CD4-positive, alpha-beta T cell (primary cell): ENCODE measurements at regions of chr5 and their contacts with region 1.

Region 1: DNA sequence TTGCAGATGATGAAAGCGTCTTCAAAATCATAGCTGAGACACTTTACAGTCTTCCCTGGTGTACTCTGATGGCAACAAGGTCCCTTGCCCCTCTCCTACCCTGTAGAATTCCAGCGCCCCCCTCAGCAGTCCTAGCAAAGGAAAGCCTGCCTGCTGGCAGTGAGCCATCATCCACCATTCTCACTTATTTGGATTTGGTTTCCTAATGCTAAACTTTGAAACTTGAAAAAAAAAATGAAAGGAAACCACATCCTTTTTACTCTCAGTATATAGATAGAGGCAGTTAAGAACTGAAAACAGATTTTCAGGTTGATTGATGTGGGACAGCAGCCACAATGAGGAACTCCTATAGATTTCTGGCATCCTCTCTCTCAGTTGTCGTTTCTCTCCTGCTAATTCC is at the start of gene GZMA:
- DNase-seq: peak in 9 of 14 experiments; percentile 5 to 86 (median 47)
- ATAC-seq: peak; percentile 80
- H3K4me3 ChIP-seq: peak within 1 kb of the TSS; percentile 59
- H3K4me3 Mint-ChIP-seq: peak within 1 kb of the TSS; percentile 85
- H3K27ac ChIP-seq: peak within 1 kb of the TSS in 1 of 2 donors; percentile 61
- H3K27ac Mint-ChIP-seq: peak within 1 kb of the TSS; percentile 68
- H3K4me1 ChIP-seq: peaks cover 49% of the 10 kb centered on the region
- H3K4me1 Mint-ChIP-seq: peaks cover 80% of the 10 kb centered on the region
- H3K27me3 ChIP-seq: no peaks in the 10 kb centered on the region
- H3K27me3 Mint-ChIP-seq: no peaks in the 10 kb centered on the region
- CTCF ChIP-seq: no peak
- total RNA-seq, gene GZMA: 3.5 to 5.0 TPM

Region 2: DNA sequence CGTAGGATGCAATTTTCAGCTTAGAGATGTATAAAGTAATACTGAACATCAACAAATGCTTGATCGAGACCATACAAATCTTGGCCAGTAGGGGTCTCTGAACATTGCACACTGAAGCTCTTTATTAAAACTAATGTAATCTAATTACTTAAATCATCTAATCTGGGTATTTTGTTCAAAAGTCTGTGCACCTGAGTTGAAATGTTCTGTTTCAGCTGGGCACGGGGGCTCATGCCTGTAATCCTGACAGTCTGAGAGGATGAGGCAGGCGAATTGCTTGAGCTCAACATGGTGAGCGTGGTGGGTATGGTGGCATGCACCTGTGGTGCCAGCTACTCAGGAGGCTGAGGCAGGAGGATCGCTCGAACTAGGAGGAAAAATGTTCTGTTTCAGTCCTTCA is 158.0 kb before region 1 on chr5:
- CTCF ChIA-PET with region 1: interaction called, 4 read pairs
- POLR2A ChIA-PET with region 1: interaction called, 17 read pairs
- intact Hi-C with region 1: no loop called
- DNase-seq: peak in 11 of 14 experiments; percentile 11 to 77 (median 29)
- ATAC-seq: peak; percentile 58
- H3K4me3 ChIP-seq: no peak overlapping the region
- H3K4me3 Mint-ChIP-seq: no peak overlapping the region
- H3K27ac ChIP-seq: no peak overlapping the region
- H3K27ac Mint-ChIP-seq: no peak overlapping the region
- H3K4me1 ChIP-seq: peaks cover 3% of the 10 kb centered on the region
- H3K4me1 Mint-ChIP-seq: no peaks in the 10 kb centered on the region
- H3K27me3 ChIP-seq: no peaks in the 10 kb centered on the region
- H3K27me3 Mint-ChIP-seq: no peaks in the 10 kb centered on the region
- CTCF ChIP-seq: peak; percentile 89

Region 3: GRCh38 chr5:55037046-55037771 is 65.1 kb before region 1 on chr5:
- CTCF ChIA-PET with region 1: no interaction called
- POLR2A ChIA-PET with region 1: interaction called, 25 read pairs
- intact Hi-C with region 1: loop called in 1 of 2 experiments (anchors 2 kb)
- DNase-seq: peak in 13 of 14 experiments; percentile 17 to 85 (median 51)
- ATAC-seq: peak; percentile 91
- H3K4me3 ChIP-seq: no peak overlapping the region
- H3K4me3 Mint-ChIP-seq: peak overlapping the region; percentile 40
- H3K27ac ChIP-seq: peak overlapping the region; percentile 55 to 64
- H3K27ac Mint-ChIP-seq: peak overlapping the region; percentile 80
- H3K4me1 ChIP-seq: peaks cover 15% of the 10 kb centered on the region
- H3K4me1 Mint-ChIP-seq: peaks cover 39% of the 10 kb centered on the region
- H3K27me3 ChIP-seq: no peaks in the 10 kb centered on the region
- H3K27me3 Mint-ChIP-seq: no peaks in the 10 kb centered on the region
- CTCF ChIP-seq: peak; percentile 14

Region 4: GRCh38 chr5:55062039-55062779 is 40.1 kb before region 1 on chr5:
- CTCF ChIA-PET with region 1: no interaction called
- POLR2A ChIA-PET with region 1: interaction called, 27 read pairs
- intact Hi-C with region 1: loop called (anchors 2 to 5 kb)
- DNase-seq: peak; percentile 3 to 89 (median 32)
- ATAC-seq: peak; percentile 77
- H3K4me3 ChIP-seq: peak overlapping the region; percentile 42
- H3K4me3 Mint-ChIP-seq: peak overlapping the region; percentile 77
- H3K27ac ChIP-seq: no peak overlapping the region
- H3K27ac Mint-ChIP-seq: peak overlapping the region; percentile 14
- H3K4me1 ChIP-seq: peaks cover 22% of the 10 kb centered on the region
- H3K4me1 Mint-ChIP-seq: peaks cover 68% of the 10 kb centered on the region
- H3K27me3 ChIP-seq: no peaks in the 10 kb centered on the region
- H3K27me3 Mint-ChIP-seq: no peaks in the 10 kb centered on the region
- CTCF ChIP-seq: no peak

Region 5: GRCh38 chr5:55072666-55073065 is 29.7 kb before region 1 on chr5:
- CTCF ChIA-PET with region 1: interaction called, 3 read pairs
- POLR2A ChIA-PET with region 1: interaction called, 33 read pairs
- intact Hi-C with region 1: loop called in 1 of 2 experiments (anchors 1 kb)
- DNase-seq: peak in 3 of 14 experiments; percentile 45 to 87 (median 53)
- ATAC-seq: peak; percentile 94
- H3K4me3 ChIP-seq: no peak overlapping the region
- H3K4me3 Mint-ChIP-seq: peak overlapping the region; percentile 4
- H3K27ac ChIP-seq: peak overlapping the region in 1 of 2 donors; percentile 41
- H3K27ac Mint-ChIP-seq: peak overlapping the region; percentile 78
- H3K4me1 ChIP-seq: peaks cover 19% of the 10 kb centered on the region
- H3K4me1 Mint-ChIP-seq: peaks cover 34% of the 10 kb centered on the region
- H3K27me3 ChIP-seq: no peaks in the 10 kb centered on the region
- H3K27me3 Mint-ChIP-seq: no peaks in the 10 kb centered on the region
- CTCF ChIP-seq: no peak

Region 6: DNA sequence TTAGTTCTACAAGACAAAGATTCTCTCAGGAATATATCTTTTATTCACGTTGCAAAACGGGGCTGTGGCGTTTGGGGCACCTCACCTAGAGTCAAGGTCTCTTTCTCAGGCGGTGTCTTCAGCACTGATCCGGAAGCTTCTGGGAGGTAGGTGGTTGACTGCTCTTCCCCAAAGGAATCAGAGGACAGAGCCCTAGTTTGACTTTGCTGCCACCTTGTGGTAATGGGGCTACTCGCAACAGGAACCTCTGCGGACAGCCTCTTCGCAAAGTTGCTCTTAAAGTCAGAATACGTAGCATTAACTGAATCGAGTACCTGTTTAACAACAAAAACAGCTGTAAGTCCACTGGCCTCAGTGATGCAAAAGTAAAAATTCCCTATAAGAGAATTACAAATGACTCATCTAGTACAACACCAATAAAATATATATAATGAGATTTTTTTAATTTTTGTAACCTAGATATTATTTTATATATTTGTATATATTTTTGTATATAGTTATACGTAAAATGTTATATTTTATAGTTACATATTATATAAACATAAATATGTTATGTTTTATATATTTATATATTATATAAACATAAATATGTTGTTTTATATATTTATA is 44.3 kb after region 1 on chr5:
- CTCF ChIA-PET with region 1: no interaction called
- POLR2A ChIA-PET with region 1: interaction called, 3 read pairs
- intact Hi-C with region 1: loop called (anchors 5 kb)
- DNase-seq: peak; percentile 68 to 90 (median 76)
- ATAC-seq: peak; percentile 95
- H3K4me3 ChIP-seq: no peak overlapping the region
- H3K4me3 Mint-ChIP-seq: no peak overlapping the region
- H3K27ac ChIP-seq: no peak overlapping the region
- H3K27ac Mint-ChIP-seq: no peak overlapping the region
- H3K4me1 ChIP-seq: peaks cover 15% of the 10 kb centered on the region
- H3K4me1 Mint-ChIP-seq: peaks cover 14% of the 10 kb centered on the region
- H3K27me3 ChIP-seq: no peaks in the 10 kb centered on the region
- H3K27me3 Mint-ChIP-seq: peaks cover 10% of the 10 kb centered on the region
- CTCF ChIP-seq: peak; percentile 99